ENCODE measurements at regions of chr9 and their contacts with region 1.

Region 1: GRCh38 chr9:89549031-89549644 is 51.2 kb upstream of the SEMA4D start:
- DNase-seq: peak; percentile 52
- ATAC-seq: peak; percentile 99
- H3K4me3 ChIP-seq: no peak overlapping the region
- H3K27ac ChIP-seq: no peak overlapping the region
- H3K4me1 ChIP-seq: no peaks in the 10 kb centered on the region
- H3K27me3 ChIP-seq: no peaks in the 10 kb centered on the region
- CTCF ChIP-seq: peak; percentile 77 to 96 (median 93)
- POLR2A ChIP-seq: no peak
- RAD21 ChIP-seq: peak; percentile 87

Region 2: GRCh38 chr9:89428901-89429890 is 119.9 kb before region 1 on chr9:
- CTCF ChIA-PET with region 1: interaction called, 15 read pairs
- POLR2A ChIA-PET with region 1: no interaction called
- RAD21 ChIA-PET with region 1: no interaction called
- intact Hi-C with region 1: loop called (anchors 5 kb)
- DNase-seq: no peak
- ATAC-seq: no peak
- H3K4me3 ChIP-seq: no peak overlapping the region
- H3K27ac ChIP-seq: no peak overlapping the region
- H3K4me1 ChIP-seq: peaks cover 15 to 59% of the 10 kb centered on the region in 2 experiments
- H3K27me3 ChIP-seq: no peaks in the 10 kb centered on the region
- CTCF ChIP-seq: peak; percentile 21 to 49 (median 45); a peak in 5 of 6 replicates
- POLR2A ChIP-seq: no peak
- RAD21 ChIP-seq: peak; percentile 30; the same call in 1 of the 2 replicates

Region 3: DNA sequence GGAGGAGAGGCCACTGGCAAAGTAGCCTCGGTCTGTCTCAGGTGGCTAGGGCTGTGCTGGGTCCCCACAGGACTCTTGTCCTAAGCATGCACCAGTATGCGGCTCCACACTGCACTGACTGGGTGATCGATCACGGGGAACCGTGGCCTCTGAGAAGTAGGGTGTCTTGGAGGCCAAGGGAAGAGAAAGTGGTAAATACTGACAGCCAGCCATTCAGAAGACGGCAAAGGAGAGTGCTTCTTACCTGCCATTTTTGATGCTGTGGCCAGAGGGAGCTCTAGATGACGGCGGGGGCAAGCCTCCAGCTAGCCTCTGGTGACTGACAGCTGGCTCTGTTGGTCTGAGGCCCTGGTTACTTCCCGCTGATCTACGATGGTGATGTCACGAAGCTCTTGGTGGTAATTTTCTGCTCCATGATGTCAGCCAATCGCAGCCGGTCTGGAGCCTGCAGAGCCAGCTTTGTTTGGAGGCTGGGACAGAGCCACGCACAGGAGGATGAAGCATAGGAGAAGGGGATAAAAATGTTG is 15.3 kb after region 1 on chr9:
- CTCF ChIA-PET with region 1: interaction called, 54 read pairs
- POLR2A ChIA-PET with region 1: interaction called, 5 read pairs
- RAD21 ChIA-PET with region 1: no interaction called
- intact Hi-C with region 1: no loop called
- DNase-seq: peak; percentile 82
- ATAC-seq: peak; percentile 100
- H3K4me3 ChIP-seq: no peak overlapping the region
- H3K27ac ChIP-seq: no peak overlapping the region
- H3K4me1 ChIP-seq: peaks cover 4 to 10% of the 10 kb centered on the region in 2 experiments; a peak in 3 of 4 replicates
- H3K27me3 ChIP-seq: no peaks in the 10 kb centered on the region
- CTCF ChIP-seq: peak; percentile 18 to 35 (median 34); a peak in 4 of 6 replicates
- POLR2A ChIP-seq: no peak
- RAD21 ChIP-seq: no peak

Region 4: DNA sequence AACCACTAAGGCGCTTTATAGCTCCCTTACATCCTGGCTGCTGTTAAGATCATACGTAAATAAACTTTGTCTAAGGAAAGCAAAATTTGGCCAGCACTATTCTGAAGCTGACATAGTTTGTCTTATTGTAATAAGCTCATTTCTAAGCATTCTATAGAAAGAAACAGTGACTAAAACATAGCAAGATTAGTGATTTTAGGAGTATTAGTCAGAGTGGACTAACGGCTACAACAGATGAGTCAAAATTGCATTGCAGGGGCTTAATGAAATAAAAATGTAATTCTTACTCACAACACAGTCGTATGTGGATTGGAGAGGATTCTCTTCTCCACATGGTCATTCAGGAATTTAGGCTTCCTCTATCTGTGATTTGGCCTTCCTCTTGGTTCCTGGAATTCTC is 403.3 kb after region 1 on chr9:
- CTCF ChIA-PET with region 1: no interaction called
- POLR2A ChIA-PET with region 1: no interaction called
- RAD21 ChIA-PET with region 1: no interaction called
- intact Hi-C with region 1: no loop called
- DNase-seq: no peak
- ATAC-seq: no peak
- H3K4me3 ChIP-seq: no peak overlapping the region
- H3K27ac ChIP-seq: no peak overlapping the region
- H3K4me1 ChIP-seq: no peaks in the 10 kb centered on the region
- H3K27me3 ChIP-seq: peaks cover 9% of the 10 kb centered on the region; the same call in 1 of the 2 replicates
- CTCF ChIP-seq: no peak
- POLR2A ChIP-seq: no peak
- RAD21 ChIP-seq: no peak